Gastrocnemius medialis (tissue), 4 donors: ENCODE measurements at regions of chr13 and their contacts with region 1.

Region 1: DNA sequence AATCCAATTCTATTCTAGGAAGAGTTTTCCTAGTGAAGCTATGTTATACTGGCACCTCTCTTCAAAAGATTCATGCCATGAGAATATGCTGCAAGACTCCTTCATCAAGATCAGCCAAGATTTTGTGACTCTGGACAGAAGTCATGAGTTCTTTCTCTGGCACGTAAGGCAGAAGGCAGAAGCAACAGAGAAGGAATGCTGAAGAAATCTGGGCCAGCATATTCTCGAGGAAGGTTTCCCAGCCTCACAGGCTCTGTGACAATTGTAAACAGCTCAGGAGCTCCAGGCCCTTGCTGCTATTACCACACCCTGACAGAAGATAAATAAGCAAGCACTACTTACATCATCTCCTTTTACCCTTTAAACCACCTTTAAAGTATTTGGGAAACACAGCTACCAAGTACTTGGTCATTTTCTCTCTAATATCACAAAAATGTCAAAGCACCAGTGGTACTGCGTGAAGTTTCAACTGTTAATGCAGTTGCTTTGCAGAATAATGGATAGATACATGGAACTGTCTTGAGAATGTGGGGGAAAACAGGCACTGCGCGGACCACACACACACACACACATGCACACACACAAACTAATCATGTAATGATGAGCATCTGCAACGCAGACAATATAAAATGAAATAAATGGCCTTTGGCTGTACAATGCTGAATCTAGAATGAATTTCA is 55.4 kb downstream of the INTS6 start:
- DNase-seq: peak; percentile 57 to 73
- ATAC-seq: peak; percentile 95 to 98
- H3K4me3 ChIP-seq: no peak overlapping the region
- H3K27ac ChIP-seq: peak overlapping the region; percentile 45 to 70 (median 62)
- H3K4me1 ChIP-seq: peaks cover 23 to 24% of the 10 kb centered on the region in 2 donors
- H3K27me3 ChIP-seq: no peaks in the 10 kb centered on the region
- CTCF ChIP-seq: no peak
- POLR2A ChIP-seq: no peak

Region 2: DNA sequence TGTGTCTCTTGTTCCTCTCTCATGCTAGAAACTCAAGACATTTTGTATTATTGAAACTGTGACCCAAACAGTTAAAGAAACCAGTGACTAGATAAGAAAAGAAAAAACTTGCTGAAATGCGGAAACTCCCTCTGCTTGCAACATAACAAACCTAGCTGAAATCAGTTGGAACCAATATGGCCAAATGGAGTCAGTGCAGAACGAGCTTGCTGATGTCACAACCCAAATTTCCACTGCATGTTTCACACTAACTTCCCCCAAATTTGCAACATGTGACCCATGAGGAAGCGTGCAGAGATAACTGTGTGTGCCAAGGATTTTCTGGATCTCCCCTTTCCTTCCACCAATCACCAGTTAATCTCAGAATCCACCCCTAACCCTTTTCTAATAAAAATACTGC is 761.9 kb before region 1 on chr13:
- in situ Hi-C with region 1: no loop called
- intact Hi-C with region 1: no loop called
- DNase-seq: peak; percentile 13 to 29
- ATAC-seq: peak; percentile 36 to 52
- H3K4me3 ChIP-seq: no peak overlapping the region
- H3K27ac ChIP-seq: peak overlapping the region in 1 of 4 donors; percentile 31
- H3K4me1 ChIP-seq: no peaks in the 10 kb centered on the region
- H3K27me3 ChIP-seq: no peaks in the 10 kb centered on the region
- CTCF ChIP-seq: no peak
- POLR2A ChIP-seq: no peak

Region 3: GRCh38 chr13:51241720-51242119 is 155.7 kb before region 1 on chr13:
- in situ Hi-C with region 1: no loop called
- intact Hi-C with region 1: no loop called
- DNase-seq: no peak
- ATAC-seq: no peak
- H3K4me3 ChIP-seq: no peak overlapping the region
- H3K27ac ChIP-seq: no peak overlapping the region
- H3K4me1 ChIP-seq: no peaks in the 10 kb centered on the region
- H3K27me3 ChIP-seq: no peaks in the 10 kb centered on the region
- CTCF ChIP-seq: no peak
- POLR2A ChIP-seq: no peak

Region 4: GRCh38 chr13:51435002-51435578 is 37.7 kb after region 1 on chr13:
- in situ Hi-C with region 1: no loop called
- intact Hi-C with region 1: loop called (anchors 2 kb)
- DNase-seq: no peak
- ATAC-seq: no peak
- H3K4me3 ChIP-seq: no peak overlapping the region
- H3K27ac ChIP-seq: no peak overlapping the region
- H3K4me1 ChIP-seq: peaks cover 5 to 8% of the 10 kb centered on the region in 2 donors
- H3K27me3 ChIP-seq: no peaks in the 10 kb centered on the region
- CTCF ChIP-seq: peak in 3 of 5 experiments; percentile 29 to 47 (median 47)
- POLR2A ChIP-seq: no peak